ENCODE measurements at regions of chr2 and their contacts with region 1.

Region 1: DNA sequence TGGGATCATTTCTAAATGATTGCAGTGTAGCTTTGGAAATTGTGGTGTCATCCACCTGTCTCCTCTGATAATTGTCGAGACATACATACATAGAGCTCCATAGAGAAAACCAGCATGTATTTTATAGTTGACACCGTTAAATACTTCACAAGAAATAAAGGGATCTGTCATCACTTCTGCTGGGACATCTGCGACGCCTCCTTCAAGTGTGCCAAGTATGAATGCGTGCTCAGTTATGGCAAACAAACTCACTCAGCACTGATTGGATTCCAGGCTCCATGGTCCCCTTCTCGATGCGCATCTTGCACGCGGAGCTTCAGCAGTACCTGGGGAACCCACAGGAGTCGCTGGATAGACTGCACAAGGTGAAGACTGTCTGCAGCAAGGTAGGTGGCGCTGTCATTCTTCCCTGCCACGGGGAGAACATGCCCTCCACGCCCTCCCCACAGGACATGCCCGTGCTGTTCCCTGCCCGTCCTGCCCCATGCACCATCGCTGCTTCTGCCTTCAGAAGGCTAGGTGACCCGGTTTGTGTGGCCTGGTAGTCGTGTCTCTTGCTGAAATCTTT is 64.1 kb downstream of the TRAPPC12 start:
- DNase-seq: peak; percentile 51
- ATAC-seq: peak; percentile 94
- H3K4me3 Mint-ChIP-seq: no peak overlapping the region
- H3K27ac Mint-ChIP-seq: 0 out of 2 replicates have a peak overlapping the region, but pooled peaks have one; percentile 65
- H3K4me1 Mint-ChIP-seq: no peaks in the 10 kb centered on the region
- H3K27me3 Mint-ChIP-seq: no peaks in the 10 kb centered on the region
- CTCF ChIP-seq: no peak

Region 2: DNA sequence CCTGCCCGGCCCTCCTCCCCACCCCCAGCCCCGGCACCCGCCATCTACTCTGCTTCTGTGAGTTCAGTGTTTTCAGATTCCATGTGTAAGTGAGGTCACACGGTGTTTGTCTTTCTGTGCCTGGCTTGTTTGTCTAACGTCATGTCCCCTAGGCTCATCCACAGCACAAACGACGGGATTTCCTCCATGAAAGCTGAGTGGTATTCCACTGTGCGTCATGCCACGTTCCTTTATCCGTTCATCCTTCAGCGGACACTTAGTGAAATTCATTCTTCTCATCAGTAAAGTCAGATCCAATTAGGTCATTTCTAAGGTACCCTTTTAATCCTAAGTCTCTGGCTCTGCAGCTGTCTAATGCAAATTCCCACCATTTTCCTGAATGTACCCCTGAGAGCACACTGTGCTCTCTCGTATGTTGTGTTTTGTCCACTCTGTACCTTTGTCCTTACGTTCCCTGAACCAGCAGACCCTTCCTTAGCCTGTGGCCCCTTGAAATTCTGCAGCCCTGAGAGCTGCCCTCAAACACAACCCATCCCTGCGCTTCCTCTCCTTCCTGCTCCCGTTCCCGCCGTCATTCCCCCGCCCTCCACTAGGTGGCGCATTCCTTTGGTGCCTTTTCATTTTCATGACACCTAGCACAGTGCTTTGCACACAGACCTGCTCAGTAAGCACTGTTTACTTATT is 20.0 kb before region 1 on chr2:
- CTCF ChIA-PET with region 1: interaction called, 13 read pairs
- POLR2A ChIA-PET with region 1: no interaction called
- DNase-seq: peak; percentile 87
- ATAC-seq: peak; percentile 91
- H3K4me3 Mint-ChIP-seq: no peak overlapping the region
- H3K27ac Mint-ChIP-seq: peak overlapping the region; percentile 19
- H3K4me1 Mint-ChIP-seq: no peaks in the 10 kb centered on the region
- H3K27me3 Mint-ChIP-seq: no peaks in the 10 kb centered on the region
- CTCF ChIP-seq: peak; percentile 99

Region 3: DNA sequence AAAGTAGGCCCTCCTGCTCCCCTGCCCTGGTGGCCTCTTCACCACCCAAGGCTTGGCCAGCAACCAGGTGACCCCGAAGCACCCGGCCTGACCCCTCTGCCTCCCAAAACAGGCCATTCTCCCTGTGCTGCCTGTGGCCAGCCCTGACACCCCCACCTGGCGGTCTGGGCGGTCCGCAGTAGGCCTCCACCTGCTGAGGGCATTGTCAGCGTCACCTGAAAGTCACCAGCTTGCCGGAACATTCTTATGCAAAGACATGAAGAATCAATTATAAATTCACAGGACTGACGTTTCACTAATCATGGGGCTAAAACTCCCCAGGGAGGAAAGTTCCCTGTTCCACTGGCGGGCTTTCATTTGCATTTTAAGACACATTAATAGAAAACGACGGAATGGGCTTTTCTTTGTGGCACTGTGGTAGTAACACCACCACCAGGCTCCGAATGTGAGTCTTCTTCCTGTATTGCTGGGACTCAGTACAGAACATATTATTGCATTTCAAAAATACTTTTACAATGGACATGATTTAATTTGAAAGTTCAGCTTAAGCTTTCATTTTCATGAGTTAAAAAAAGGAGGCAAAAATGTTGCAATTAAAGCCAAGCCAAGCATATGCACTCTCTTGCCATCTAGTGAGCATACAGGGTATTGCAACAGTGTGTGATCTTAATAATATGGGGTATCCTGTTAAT is 18.4 kb after region 1 on chr2:
- CTCF ChIA-PET with region 1: interaction called, 30 read pairs
- POLR2A ChIA-PET with region 1: no interaction called
- DNase-seq: no peak
- ATAC-seq: peak; percentile 43
- H3K4me3 Mint-ChIP-seq: no peak overlapping the region
- H3K27ac Mint-ChIP-seq: peak overlapping the region; percentile 82
- H3K4me1 Mint-ChIP-seq: peaks cover 26% of the 10 kb centered on the region
- H3K27me3 Mint-ChIP-seq: no peaks in the 10 kb centered on the region; the same call in 1 of the 2 replicates
- CTCF ChIP-seq: 0 out of 2 replicates have a peak, but pooled peaks have one; percentile 23

Region 4: GRCh38 chr2:3493615-3494007 is 50.0 kb after region 1 on chr2:
- CTCF ChIA-PET with region 1: no interaction called
- POLR2A ChIA-PET with region 1: no interaction called
- DNase-seq: peak; percentile 49
- ATAC-seq: peak; percentile 82
- H3K4me3 Mint-ChIP-seq: no peak overlapping the region
- H3K27ac Mint-ChIP-seq: no peak overlapping the region
- H3K4me1 Mint-ChIP-seq: peaks cover 15% of the 10 kb centered on the region; the same call in 1 of the 2 replicates
- H3K27me3 Mint-ChIP-seq: no peaks in the 10 kb centered on the region
- CTCF ChIP-seq: no peak

Region 5: GRCh38 chr2:3558205-3559014 is 114.8 kb after region 1 on chr2 and contains the start of gene RNASEH1:
- CTCF ChIA-PET with region 1: interaction called, 3 read pairs
- POLR2A ChIA-PET with region 1: interaction called, 10 read pairs
- DNase-seq: peak; percentile 98
- ATAC-seq: peak; percentile 99
- H3K4me3 Mint-ChIP-seq: peak within 1 kb of the TSS; percentile 89
- H3K27ac Mint-ChIP-seq: peak within 1 kb of the TSS; percentile 95
- H3K4me1 Mint-ChIP-seq: peaks cover 10% of the 10 kb centered on the region
- H3K27me3 Mint-ChIP-seq: no peaks in the 10 kb centered on the region
- CTCF ChIP-seq: no peak
- total RNA-seq, gene RNASEH1: 34.0 to 44.4 TPM (median 38.7 TPM) in 3 replicates

Measured in WTC11 (cell line).